CD14-positive monocyte (primary cell): ENCODE measurements at regions of chr19 and their contacts with region 1.

Region 1: DNA sequence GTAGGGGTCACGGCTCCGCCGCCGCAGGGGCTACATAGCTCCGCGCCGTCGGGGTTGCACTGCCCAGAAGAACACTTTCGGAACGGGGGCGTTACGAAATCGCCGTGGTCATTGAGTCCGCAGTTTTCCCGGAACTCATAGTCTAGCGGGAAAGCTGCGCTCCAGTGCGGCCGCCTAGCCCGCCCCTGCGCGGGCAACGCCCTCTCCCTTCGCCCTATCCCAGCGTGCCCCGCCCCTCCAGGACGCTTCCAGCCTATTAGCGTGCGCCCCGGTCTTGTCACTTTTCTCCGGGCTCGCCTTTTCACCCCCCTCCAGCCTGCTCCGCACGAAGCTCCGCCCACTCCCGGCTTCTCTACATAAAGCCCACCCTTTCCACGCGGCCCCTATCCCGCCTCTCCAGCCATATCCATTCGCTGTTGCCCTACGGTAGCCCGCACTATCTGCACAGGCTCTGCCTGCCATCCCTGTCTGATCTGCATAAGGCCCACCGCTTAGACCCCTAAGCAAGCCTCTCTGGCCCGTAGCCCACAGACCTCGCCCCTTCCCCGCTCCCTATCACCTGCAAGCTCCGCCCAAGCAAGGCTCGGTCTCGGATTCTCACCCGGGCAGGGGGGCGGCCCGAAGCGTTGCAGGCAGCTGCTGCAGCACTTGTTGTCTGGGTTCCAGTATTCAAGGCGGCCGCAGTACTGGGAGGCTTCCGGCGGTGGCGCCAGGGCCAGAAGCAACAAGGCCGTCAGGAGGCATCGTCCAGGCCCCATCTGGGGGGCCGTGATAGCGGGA is 1.6 kb downstream of the IGFLR1 start:
- DNase-seq: peak; percentile 93 to 96 (median 95)
- H3K4me3 ChIP-seq: peak overlapping the region; percentile 62 to 100 (median 89)
- H3K4me3 Mint-ChIP-seq: peak overlapping the region; percentile 88 to 95
- H3K27ac ChIP-seq: peak overlapping the region; percentile 63 to 89
- H3K27ac Mint-ChIP-seq: peak overlapping the region; percentile 89 to 97 (median 92)
- H3K4me1 ChIP-seq: peaks cover 44 to 55% of the 10 kb centered on the region in 2 donors
- H3K4me1 Mint-ChIP-seq: peaks cover 40% of the 10 kb centered on the region
- H3K27me3 ChIP-seq: no peaks in the 10 kb centered on the region
- H3K27me3 Mint-ChIP-seq: no peaks in the 10 kb centered on the region
- CTCF ChIP-seq: peak; percentile 18

Region 2: DNA sequence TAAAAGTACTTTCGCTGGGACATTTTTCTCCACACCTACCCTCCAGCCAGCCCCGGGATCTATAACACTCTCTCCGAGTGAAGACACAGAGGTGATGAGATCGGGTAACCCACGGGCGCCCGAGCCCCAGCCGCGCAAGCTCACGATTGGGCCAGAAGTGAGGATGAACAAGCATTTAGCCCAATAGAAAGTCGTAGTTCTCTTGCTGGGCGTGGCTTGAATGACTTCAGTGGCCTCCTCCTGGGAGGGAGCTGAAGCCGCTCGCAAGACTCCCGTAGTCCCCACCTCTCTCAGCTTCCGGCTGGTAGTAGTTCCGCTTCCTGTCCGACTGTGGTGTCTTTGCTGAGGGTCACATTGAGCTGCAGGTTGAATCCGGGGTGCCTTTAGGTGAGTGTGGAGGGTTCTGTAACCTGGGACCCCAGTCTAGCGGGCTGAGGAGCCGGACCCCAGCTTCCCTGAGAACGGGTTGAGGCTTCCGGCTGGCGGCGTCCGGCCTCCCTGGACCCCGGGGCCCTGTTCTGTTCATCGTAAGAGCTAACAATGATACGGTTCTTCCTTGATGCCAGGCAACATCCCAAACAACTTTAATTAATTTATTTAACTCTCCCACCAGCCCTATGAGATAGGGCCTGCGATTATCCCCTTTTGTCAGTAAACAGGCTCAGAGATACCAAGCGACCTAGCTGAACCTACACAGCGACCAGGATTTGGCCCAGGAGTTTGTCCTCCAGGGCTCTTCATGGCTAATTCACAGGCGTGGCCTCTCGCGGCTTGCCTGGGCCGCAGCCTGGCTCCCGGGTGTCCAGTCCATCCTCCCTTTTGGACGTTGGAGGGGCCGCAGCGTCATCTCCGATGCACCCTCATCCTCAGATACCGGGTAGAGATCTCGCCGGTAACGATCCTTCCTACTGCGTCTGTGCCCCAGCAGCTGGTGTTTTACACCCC is 92.3 kb before region 1 on chr19 and contains the start of gene COX6B1:
- intact Hi-C with region 1: loop called in 1 of 2 experiments (anchors 10 kb)
- DNase-seq: peak; percentile 95 to 98 (median 96)
- H3K4me3 ChIP-seq: peak within 1 kb of the TSS; percentile 58 to 91 (median 66)
- H3K4me3 Mint-ChIP-seq: peak within 1 kb of the TSS; percentile 96 to 97
- H3K27ac ChIP-seq: peak within 1 kb of the TSS; percentile 63 to 91
- H3K27ac Mint-ChIP-seq: peak within 1 kb of the TSS; percentile 90 to 97 (median 93)
- H3K4me1 ChIP-seq: peaks cover 35 to 45% of the 10 kb centered on the region in 2 donors
- H3K4me1 Mint-ChIP-seq: peaks cover 39% of the 10 kb centered on the region
- H3K27me3 ChIP-seq: no peaks in the 10 kb centered on the region
- H3K27me3 Mint-ChIP-seq: peaks cover 0 to 1% (median 0%) of the 10 kb centered on the region in 3 donors
- CTCF ChIP-seq: no peak
- polyA plus RNA-seq, gene COX6B1: 611 to 948 (median 825) TPM

Region 3: GRCh38 chr19:35899547-35900214 is 159.1 kb after region 1 on chr19:
- intact Hi-C with region 1: loop called in 1 of 2 experiments (anchors 10 kb)
- DNase-seq: peak; percentile 77 to 96 (median 89)
- H3K4me3 ChIP-seq: peak overlapping the region; percentile 80 to 99 (median 97)
- H3K4me3 Mint-ChIP-seq: peak overlapping the region; percentile 97 to 98
- H3K27ac ChIP-seq: peak overlapping the region; percentile 95 to 98
- H3K27ac Mint-ChIP-seq: peak overlapping the region; percentile 96 to 100 (median 100)
- H3K4me1 ChIP-seq: peaks cover 54 to 65% of the 10 kb centered on the region in 2 donors
- H3K4me1 Mint-ChIP-seq: peaks cover 54% of the 10 kb centered on the region
- H3K27me3 ChIP-seq: no peaks in the 10 kb centered on the region
- H3K27me3 Mint-ChIP-seq: peaks cover 0 to 10% (median 0%) of the 10 kb centered on the region in 3 donors
- CTCF ChIP-seq: no peak

Region 4: GRCh38 chr19:36214386-36215275 is 474.0 kb after region 1 on chr19 and contains the starts of genes ZNF146 and ZNF565:
- intact Hi-C with region 1: loop called in 1 of 2 experiments (anchors 10 kb)
- DNase-seq: peak; percentile 96 to 99 (median 96)
- H3K4me3 ChIP-seq: peak within 1 kb of the TSS; percentile 61 to 92 (median 69)
- H3K4me3 Mint-ChIP-seq: no peak within 1 kb of the TSS
- H3K27ac ChIP-seq: peak within 1 kb of the TSS; percentile 72 to 95
- H3K27ac Mint-ChIP-seq: no peak within 1 kb of the TSS
- H3K4me1 ChIP-seq: peaks cover 11 to 18% of the 10 kb centered on the region in 2 donors
- H3K4me1 Mint-ChIP-seq: peaks cover 5% of the 10 kb centered on the region
- H3K27me3 ChIP-seq: no peaks in the 10 kb centered on the region
- H3K27me3 Mint-ChIP-seq: no peaks in the 10 kb centered on the region
- CTCF ChIP-seq: no peak
- polyA plus RNA-seq, gene ZNF146: 12.2 to 26.5 (median 15.8) TPM
- polyA plus RNA-seq, gene ZNF565: 1.5 to 3.5 (median 2.1) TPM

Region 5: GRCh38 chr19:37334179-37335071 is 1593.8 kb after region 1 on chr19:
- intact Hi-C with region 1: loop called in 1 of 2 experiments (anchors 10 kb)
- DNase-seq: peak; percentile 79 to 86 (median 79)
- H3K4me3 ChIP-seq: peak overlapping the region; percentile 53 to 92 (median 64)
- H3K4me3 Mint-ChIP-seq: peak overlapping the region; percentile 85 to 90
- H3K27ac ChIP-seq: peak overlapping the region; percentile 29 to 89
- H3K27ac Mint-ChIP-seq: peak overlapping the region; percentile 77 to 91 (median 89)
- H3K4me1 ChIP-seq: peaks cover 8 to 17% of the 10 kb centered on the region in 2 donors
- H3K4me1 Mint-ChIP-seq: peaks cover 16% of the 10 kb centered on the region
- H3K27me3 ChIP-seq: no peaks in the 10 kb centered on the region
- H3K27me3 Mint-ChIP-seq: peaks cover 0 to 3% (median 0%) of the 10 kb centered on the region in 3 donors
- CTCF ChIP-seq: no peak